Dendritic cell treated with granulocyte-macrophage colony-stimulating factor and Interleukin-4, amounts not matched to agents 40 ng/mL and 50 ng/mL, for 4 days (primary cell): ENCODE measurements at regions of chr19 and their contacts with region 1.

Region 1: DNA sequence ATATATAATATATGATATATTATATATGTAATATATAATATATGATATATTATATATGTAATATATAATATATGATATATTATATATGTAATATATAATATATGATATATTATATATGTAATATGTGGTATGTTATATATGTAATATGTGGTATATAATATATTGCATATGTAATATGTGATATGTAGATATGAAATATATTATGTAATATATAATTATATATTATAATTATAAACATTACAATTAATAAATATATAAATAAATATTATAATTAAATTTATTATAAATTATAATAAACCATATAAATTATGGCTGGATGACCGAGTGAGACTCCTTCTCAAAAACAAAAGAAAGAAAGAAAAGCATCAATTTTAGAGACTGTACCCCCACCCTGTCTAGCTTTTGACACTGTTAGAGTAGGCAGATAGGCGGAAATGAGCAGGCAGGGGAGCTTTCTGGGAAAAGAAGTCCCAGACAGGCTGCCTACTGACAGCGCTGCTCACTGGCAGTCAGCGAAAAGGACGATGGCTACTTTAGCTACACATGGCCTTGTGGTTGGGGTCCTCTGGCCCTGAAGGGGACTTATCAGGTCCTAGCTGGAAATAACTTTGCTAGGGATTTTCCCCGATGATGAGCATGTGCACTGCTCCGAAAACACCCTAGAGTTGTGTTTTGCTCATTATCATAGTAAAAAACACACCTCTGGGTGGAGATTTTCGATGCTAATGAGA is 19.7 kb downstream of the C3 start:
- H3K4me3 Mint-ChIP-seq: no peak overlapping the region
- H3K27ac Mint-ChIP-seq: no peak overlapping the region
- H3K4me1 Mint-ChIP-seq: no peaks in the 10 kb centered on the region
- H3K27me3 Mint-ChIP-seq: peaks cover 37% of the 10 kb centered on the region

Region 2: GRCh38 chr19:6654347-6655310 is 46.1 kb before region 1 on chr19:
- intact Hi-C with region 1: loop called (anchors 5 kb)
- H3K4me3 Mint-ChIP-seq: no peak overlapping the region
- H3K27ac Mint-ChIP-seq: no peak overlapping the region
- H3K4me1 Mint-ChIP-seq: peaks cover 11% of the 10 kb centered on the region
- H3K27me3 Mint-ChIP-seq: peaks cover 78% of the 10 kb centered on the region